MCF 10A (cell line): ENCODE measurements at regions of chr3 and their contacts with region 1.

Region 1: GRCh38 chr3:31067009-31067408 is 172.5 kb upstream of the GADL1 start:
- DNase-seq: peak; percentile 98
- H3K4me3 Mint-ChIP-seq: peak overlapping the region; percentile 60
- H3K27ac Mint-ChIP-seq: no peak overlapping the region
- H3K4me1 Mint-ChIP-seq: peaks cover 43% of the 10 kb centered on the region
- H3K27me3 Mint-ChIP-seq: no peaks in the 10 kb centered on the region
- CTCF ChIP-seq: no peak

Region 2: GRCh38 chr3:31041161-31041978 is 25.6 kb before region 1 on chr3:
- CTCF ChIA-PET with region 1: no interaction called
- POLR2A ChIA-PET with region 1: interaction called, 65 read pairs
- intact Hi-C with region 1: loop called (anchors 1 kb)
- DNase-seq: peak; percentile 91
- H3K4me3 Mint-ChIP-seq: no peak overlapping the region
- H3K27ac Mint-ChIP-seq: peak overlapping the region; percentile 81
- H3K4me1 Mint-ChIP-seq: peaks cover 47% of the 10 kb centered on the region
- H3K27me3 Mint-ChIP-seq: no peaks in the 10 kb centered on the region
- CTCF ChIP-seq: no peak

Region 3: DNA sequence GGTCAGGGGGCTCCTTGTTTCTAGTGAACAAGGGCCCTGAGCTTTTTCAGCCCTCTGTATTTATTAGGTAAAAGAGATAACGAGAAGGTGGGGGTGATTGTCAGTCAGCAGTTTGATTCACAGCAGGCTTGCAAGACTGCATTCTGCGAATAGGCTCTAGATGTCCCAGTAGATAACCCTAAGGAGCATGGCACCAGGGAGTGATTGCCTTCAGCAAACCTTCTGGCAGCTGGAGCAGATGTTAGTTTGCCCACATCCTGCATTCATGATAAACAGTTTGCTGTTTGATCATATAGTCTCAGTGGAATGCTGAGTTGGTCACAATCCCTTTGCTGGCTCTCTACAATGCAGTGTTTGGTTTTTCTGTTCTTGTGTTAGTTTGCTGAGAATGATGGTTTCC is 11.3 kb before region 1 on chr3:
- CTCF ChIA-PET with region 1: no interaction called
- POLR2A ChIA-PET with region 1: interaction called, 15 read pairs
- intact Hi-C with region 1: no loop called
- DNase-seq: no peak
- H3K4me3 Mint-ChIP-seq: no peak overlapping the region
- H3K27ac Mint-ChIP-seq: no peak overlapping the region
- H3K4me1 Mint-ChIP-seq: peaks cover 7% of the 10 kb centered on the region
- H3K27me3 Mint-ChIP-seq: no peaks in the 10 kb centered on the region
- CTCF ChIP-seq: no peak

Region 4: GRCh38 chr3:31077021-31077601 is 10.1 kb after region 1 on chr3:
- CTCF ChIA-PET with region 1: interaction called, 3 read pairs
- POLR2A ChIA-PET with region 1: interaction called, 23 read pairs
- intact Hi-C with region 1: no loop called
- DNase-seq: peak; percentile 85
- H3K4me3 Mint-ChIP-seq: no peak overlapping the region
- H3K27ac Mint-ChIP-seq: peak overlapping the region; percentile 4
- H3K4me1 Mint-ChIP-seq: peaks cover 18% of the 10 kb centered on the region
- H3K27me3 Mint-ChIP-seq: no peaks in the 10 kb centered on the region
- CTCF ChIP-seq: no peak

Region 5: GRCh38 chr3:31105438-31106077 is 38.5 kb after region 1 on chr3:
- CTCF ChIA-PET with region 1: interaction called, 4 read pairs
- POLR2A ChIA-PET with region 1: interaction called, 37 read pairs
- intact Hi-C with region 1: loop called (anchors 2 kb)
- DNase-seq: peak; percentile 96
- H3K4me3 Mint-ChIP-seq: peak overlapping the region; percentile 54
- H3K27ac Mint-ChIP-seq: peak overlapping the region; percentile 72
- H3K4me1 Mint-ChIP-seq: peaks cover 52% of the 10 kb centered on the region
- H3K27me3 Mint-ChIP-seq: no peaks in the 10 kb centered on the region
- CTCF ChIP-seq: no peak

Region 6: DNA sequence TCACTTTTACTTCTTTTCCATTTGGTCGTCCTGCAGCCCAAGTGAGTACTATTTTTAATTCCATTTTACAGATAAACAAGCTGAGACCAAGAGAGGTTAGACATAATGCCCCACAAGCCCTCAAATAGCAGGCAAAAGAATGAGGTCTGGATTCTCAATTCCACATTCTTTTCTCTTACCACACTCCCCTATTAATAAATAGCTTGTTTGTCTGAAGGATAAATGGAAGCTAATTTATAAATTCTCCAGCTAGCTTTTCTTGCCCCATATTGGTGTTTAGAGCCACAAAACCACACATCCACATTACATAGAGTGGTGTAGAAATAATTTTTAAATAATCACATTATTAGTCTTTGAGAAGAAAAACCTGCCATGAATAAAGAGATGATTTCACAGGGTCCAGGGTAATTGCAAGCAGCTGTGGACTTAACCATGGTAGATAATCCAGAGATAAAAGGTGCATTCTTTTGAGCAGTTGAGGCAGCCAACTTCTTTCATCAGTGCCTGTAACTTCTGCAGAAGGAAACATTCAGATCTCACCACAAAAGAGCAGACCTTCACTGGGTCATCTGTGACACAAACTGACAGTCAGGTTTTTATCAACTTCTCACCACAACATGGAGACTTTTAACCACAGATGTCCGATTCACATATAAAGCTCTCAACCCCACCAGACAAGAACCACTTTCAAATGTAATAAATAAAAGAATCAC is 152.3 kb after region 1 on chr3:
- CTCF ChIA-PET with region 1: no interaction called
- POLR2A ChIA-PET with region 1: no interaction called
- intact Hi-C with region 1: no loop called
- DNase-seq: no peak
- H3K4me3 Mint-ChIP-seq: no peak overlapping the region
- H3K27ac Mint-ChIP-seq: no peak overlapping the region
- H3K4me1 Mint-ChIP-seq: no peaks in the 10 kb centered on the region
- H3K27me3 Mint-ChIP-seq: no peaks in the 10 kb centered on the region
- CTCF ChIP-seq: no peak